Head of caudate nucleus (tissue), 42 donors: ENCODE measurements at regions of chr6 and their contacts with region 1.

Region 1: DNA sequence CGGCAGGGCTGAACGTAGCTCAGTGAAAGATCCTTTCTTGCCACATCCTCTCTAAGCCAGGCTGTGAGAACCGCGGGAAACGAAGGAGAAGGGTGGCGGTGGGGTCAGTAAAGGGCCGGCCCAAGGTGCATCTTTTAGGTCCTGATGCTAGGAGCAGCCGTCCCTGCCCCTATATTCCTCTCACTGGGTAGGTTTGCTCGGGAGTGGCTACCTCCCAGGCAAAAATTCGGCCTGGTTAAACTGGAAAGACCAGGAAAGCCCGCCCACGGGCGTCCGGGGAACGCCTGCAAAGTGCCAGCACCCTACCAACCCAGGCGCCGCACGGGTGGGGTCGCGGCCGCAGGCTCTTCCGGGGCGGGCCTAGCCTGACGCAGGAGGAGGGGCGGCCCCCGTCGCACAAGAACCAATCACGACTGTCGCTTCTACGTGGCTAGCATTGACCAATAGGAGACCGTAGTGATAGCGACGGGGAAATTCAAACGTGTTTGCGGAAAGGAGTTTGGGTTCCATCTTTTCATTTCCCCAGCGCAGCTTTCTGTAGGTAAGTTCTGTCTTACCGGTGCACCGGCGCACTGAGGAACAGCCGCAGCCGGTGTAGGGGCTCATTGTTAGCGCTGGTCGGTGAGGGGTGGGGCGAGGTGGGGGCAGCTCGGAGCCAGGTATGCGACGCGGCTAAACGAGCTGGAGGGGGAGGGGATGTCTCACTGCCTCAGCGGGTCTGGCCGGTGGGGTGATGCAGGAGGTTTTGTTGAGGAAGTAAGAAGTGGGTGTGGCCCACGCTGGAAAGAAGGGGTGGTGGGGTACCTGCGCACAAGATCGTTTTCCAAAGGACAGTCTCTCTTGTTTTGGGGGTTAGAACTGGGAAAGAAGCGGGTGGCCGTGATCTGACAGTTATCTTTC is at the start of gene TTK:
- DNase-seq: peak; percentile 81 to 97 (median 93)

Region 2: GRCh38 chr6:79949233-79949632 is 55.2 kb before region 1 on chr6:
- intact Hi-C with region 1: loop called (anchors 5 kb)
- DNase-seq: peak in 27 of 42 donors; percentile 11 to 67 (median 37)

Region 3: DNA sequence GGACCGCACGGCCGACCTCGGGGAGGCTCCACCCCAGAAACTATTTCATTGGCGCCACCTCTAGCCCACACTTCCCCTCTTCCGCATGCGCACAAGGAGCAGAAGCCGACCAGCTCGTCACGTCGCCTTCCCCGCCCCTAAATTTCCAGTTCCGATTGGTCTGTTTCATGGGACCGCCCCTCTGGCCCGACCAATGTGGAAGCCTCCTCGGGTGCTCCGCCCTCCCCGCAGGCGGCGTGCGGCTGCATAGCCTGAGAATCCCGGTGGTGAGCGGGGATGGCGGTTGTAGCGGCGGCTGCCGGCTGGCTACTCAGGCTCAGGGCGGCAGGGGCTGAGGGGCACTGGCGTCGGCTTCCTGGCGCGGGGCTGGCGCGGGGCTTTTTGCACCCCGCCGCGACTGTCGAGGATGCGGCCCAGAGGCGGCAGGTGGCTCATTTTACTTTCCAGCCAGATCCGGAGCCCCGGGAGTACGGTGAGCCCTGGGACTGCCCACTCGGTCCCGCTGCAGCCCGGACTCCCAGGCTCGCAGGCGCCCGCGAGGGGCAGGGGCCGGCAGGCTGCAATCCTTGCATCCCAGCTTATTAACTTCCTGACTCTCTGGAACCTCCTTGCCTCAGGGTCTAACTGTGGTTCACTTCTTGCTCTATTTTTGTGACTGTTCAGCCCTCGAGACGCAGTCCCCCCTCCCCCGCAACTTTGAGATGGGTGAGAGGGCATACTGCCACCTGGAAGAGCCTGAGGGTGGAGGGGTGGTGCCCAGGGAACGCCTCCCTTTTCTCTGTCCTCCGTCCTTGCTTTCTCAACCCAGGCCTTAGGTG is 102.2 kb after region 1 on chr6 and contains the start of gene BCKDHB:
- intact Hi-C with region 1: loop called (anchors 10 kb)
- DNase-seq: peak; percentile 93 to 99 (median 98)